Activated CD8-positive, alpha-beta memory T cell treated with anti-CD3 and anti-CD28 coated beads, Interleukin-2, amount 10 ng/mL, durations not matched to agents 7 days and 5 days (primary cell): ENCODE measurements at regions of chr12 and their contacts with region 1.

Region 1: GRCh38 chr12:96516472-96517430 is 27.4 kb downstream of the CFAP54 start:
- DNase-seq: peak; percentile 94
- ATAC-seq: peak; percentile 91
- H3K4me3 Mint-ChIP-seq: peak overlapping the region; percentile 53
- H3K27ac Mint-ChIP-seq: peak overlapping the region; percentile 80
- H3K4me1 Mint-ChIP-seq: peaks cover 21% of the 10 kb centered on the region
- H3K27me3 Mint-ChIP-seq: no peaks in the 10 kb centered on the region

Region 2: GRCh38 chr12:95998611-95999286 is 518.0 kb before region 1 on chr12:
- CTCF ChIA-PET with region 1: interaction called, 14 read pairs
- DNase-seq: peak; percentile 73
- ATAC-seq: peak; percentile 99
- H3K4me3 Mint-ChIP-seq: no peak overlapping the region
- H3K27ac Mint-ChIP-seq: peak overlapping the region; percentile 52
- H3K4me1 Mint-ChIP-seq: peaks cover 11% of the 10 kb centered on the region
- H3K27me3 Mint-ChIP-seq: no peaks in the 10 kb centered on the region

Region 3: GRCh38 chr12:96069511-96070231 is 447.1 kb before region 1 on chr12:
- CTCF ChIA-PET with region 1: interaction called, 22 read pairs
- DNase-seq: no peak
- ATAC-seq: no peak
- H3K4me3 Mint-ChIP-seq: no peak overlapping the region
- H3K27ac Mint-ChIP-seq: no peak overlapping the region
- H3K4me1 Mint-ChIP-seq: peaks cover 16% of the 10 kb centered on the region
- H3K27me3 Mint-ChIP-seq: peaks cover 11% of the 10 kb centered on the region

Region 4: GRCh38 chr12:96431067-96431466 is 85.7 kb before region 1 on chr12:
- CTCF ChIA-PET with region 1: no interaction called
- DNase-seq: no peak
- ATAC-seq: no peak
- H3K4me3 Mint-ChIP-seq: no peak overlapping the region
- H3K27ac Mint-ChIP-seq: no peak overlapping the region
- H3K4me1 Mint-ChIP-seq: peaks cover 44% of the 10 kb centered on the region
- H3K27me3 Mint-ChIP-seq: no peaks in the 10 kb centered on the region

Region 5: GRCh38 chr12:96445691-96446583 is 70.8 kb before region 1 on chr12:
- CTCF ChIA-PET with region 1: interaction called, 11 read pairs
- DNase-seq: peak; percentile 86
- ATAC-seq: peak; percentile 98
- H3K4me3 Mint-ChIP-seq: peak overlapping the region; percentile 37
- H3K27ac Mint-ChIP-seq: peak overlapping the region; percentile 95
- H3K4me1 Mint-ChIP-seq: peaks cover 49% of the 10 kb centered on the region
- H3K27me3 Mint-ChIP-seq: no peaks in the 10 kb centered on the region

Region 6: GRCh38 chr12:96501139-96501761 is 15.5 kb before region 1 on chr12:
- CTCF ChIA-PET with region 1: interaction called, 17 read pairs
- DNase-seq: peak; percentile 77
- ATAC-seq: peak; percentile 87
- H3K4me3 Mint-ChIP-seq: no peak overlapping the region
- H3K27ac Mint-ChIP-seq: peak overlapping the region; percentile 96
- H3K4me1 Mint-ChIP-seq: peaks cover 53% of the 10 kb centered on the region
- H3K27me3 Mint-ChIP-seq: no peaks in the 10 kb centered on the region